ENCODE measurements at regions of chr19 and their contacts with region 1.

Region 1: DNA sequence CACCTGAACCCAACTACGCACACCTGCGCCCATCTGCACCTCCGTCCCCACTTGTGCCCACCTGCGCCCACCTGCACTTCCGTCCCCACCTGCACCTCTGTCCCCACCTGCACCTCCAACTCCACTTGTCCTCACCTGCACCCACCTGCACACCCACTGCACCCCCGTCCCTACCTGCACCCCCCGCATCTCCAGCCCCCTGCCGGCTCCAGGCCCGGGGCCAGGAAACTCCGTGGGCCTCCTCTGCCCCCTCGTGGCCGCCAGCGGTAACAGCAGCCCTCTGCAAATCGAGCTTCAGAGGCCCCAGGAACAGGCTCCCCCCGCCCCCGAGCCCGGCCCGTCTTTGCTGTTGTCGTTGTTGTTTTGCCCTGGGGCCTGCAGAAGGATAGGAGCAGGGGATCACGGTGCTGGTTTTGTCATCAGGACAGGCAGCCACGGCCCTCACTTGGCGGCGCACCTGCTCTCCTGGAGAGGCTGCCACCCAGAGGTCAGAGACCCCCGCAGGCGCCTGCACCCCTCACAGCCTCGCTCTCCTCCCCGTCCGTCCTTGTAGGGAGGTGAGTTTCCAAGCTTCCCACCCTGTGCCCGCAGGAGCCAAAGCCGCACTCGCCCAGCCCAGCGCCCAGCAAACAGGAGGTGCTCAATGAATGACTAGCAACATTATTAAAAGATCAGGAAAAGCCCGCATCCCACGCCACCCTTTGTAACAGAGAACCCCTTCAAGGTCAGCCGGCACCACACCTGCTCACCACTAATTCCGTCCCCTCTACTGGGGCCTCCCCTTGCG is 65.4 kb downstream of the GNG7 start:
- DNase-seq: peak; percentile 85
- H3K4me3 Mint-ChIP-seq: no peak overlapping the region
- H3K27ac Mint-ChIP-seq: no peak overlapping the region
- H3K4me1 Mint-ChIP-seq: peaks cover 15% of the 10 kb centered on the region
- H3K27me3 Mint-ChIP-seq: peaks cover 66% of the 10 kb centered on the region

Region 2: GRCh38 chr19:2475702-2476450 is 161.2 kb before region 1 on chr19 and contains the start of gene GADD45B:
- CTCF ChIA-PET with region 1: interaction called, 12 read pairs
- DNase-seq: peak; percentile 98
- H3K4me3 Mint-ChIP-seq: peak within 1 kb of the TSS; percentile 89
- H3K27ac Mint-ChIP-seq: peak within 1 kb of the TSS; percentile 92
- H3K4me1 Mint-ChIP-seq: peaks cover 35% of the 10 kb centered on the region
- H3K27me3 Mint-ChIP-seq: peaks cover 11% of the 10 kb centered on the region

Region 3: DNA sequence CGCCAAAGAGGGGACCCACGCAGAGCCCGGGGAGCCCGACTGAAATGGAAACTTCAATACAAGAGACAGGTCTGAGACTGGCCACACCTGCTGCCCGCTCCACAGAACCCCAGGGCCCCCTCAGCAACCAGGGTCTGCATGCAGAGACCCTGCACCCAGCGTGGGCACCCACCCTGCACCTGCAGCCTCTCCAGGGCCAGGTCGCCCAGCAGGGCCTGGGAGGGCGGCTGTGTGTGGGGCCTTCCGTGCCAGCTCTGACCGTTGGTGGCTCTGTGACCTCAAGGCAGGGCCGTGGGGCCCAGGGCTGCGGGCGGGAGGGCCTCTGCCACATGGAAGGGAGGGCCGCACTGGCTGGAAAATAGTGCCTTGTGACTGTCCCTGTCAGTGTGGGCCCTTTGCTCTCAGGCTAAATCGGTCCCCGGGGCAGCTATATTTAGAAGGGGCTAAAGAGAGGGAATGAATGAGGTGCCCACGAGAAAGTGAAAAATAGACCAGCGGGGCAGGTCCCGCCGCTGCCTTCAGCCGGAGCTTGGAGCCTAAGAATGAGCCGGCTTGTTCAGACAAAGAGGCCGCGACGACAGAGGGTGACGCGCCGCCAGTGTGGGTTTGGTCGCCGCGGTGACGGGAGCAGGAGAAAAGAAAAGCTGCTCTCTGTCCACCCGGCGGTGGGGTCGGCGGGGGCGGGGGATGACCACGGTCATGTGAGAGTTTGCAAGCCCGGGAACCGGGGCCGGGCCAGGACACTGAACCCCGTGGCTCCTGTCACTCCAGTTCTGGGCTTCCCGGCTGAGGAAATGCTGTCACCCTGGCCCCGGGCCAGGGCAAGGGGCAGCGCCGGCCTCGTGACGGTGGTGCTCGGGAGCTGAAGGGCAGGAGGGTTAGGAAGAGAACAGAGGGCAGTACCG is 90.7 kb before region 1 on chr19:
- CTCF ChIA-PET with region 1: no interaction called
- DNase-seq: no peak
- H3K4me3 Mint-ChIP-seq: no peak overlapping the region
- H3K27ac Mint-ChIP-seq: no peak overlapping the region
- H3K4me1 Mint-ChIP-seq: peaks cover 63% of the 10 kb centered on the region
- H3K27me3 Mint-ChIP-seq: no peaks in the 10 kb centered on the region

Region 4: DNA sequence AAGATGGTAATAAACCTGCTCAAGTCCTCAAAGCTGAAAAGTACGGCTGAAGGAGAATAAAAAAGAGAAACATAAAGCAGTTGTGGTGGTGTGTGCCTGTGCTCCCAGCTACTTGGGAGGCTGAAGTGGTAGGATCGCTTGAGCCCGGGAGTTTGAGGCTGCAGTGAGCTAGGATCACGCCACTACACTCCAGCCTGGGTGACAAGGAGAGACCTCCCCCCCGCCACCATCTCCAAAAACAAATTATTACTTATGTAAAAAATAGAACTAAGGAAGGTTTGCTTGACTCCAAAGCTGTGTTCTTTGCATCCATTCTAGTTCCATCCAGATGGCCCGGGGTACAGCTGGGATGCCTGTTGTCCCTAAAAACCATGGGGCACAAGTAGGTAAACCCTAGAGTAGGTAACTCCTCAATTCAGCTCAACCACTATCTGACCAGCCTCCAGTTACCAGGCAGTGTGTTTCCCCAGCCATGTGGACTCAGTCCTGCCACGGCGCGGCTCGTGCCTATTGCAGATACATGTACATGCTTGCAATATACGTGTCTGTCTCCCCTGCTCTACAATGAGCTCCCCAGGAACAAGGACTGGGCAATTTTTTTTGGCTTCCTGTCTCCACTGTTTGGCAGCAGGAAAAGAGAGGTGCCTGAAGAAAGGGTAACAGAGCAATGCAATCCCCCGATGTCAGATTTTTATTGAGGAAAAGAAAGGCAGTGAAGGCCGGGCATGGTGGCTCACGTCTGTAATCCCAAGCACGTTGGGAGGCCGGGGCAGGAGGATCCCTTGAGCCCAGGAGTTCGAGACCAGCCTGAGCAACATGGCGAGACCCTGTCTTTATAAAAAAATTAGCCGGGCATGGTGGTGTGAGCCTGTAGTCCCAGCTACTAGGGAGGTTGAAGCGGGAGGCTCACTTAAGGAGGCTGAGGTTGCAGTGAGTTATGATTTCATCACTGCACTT is 35.9 kb before region 1 on chr19:
- CTCF ChIA-PET with region 1: interaction called, 10 read pairs
- DNase-seq: no peak
- H3K4me3 Mint-ChIP-seq: no peak overlapping the region
- H3K27ac Mint-ChIP-seq: no peak overlapping the region
- H3K4me1 Mint-ChIP-seq: peaks cover 15% of the 10 kb centered on the region
- H3K27me3 Mint-ChIP-seq: peaks cover 45% of the 10 kb centered on the region

Region 5: DNA sequence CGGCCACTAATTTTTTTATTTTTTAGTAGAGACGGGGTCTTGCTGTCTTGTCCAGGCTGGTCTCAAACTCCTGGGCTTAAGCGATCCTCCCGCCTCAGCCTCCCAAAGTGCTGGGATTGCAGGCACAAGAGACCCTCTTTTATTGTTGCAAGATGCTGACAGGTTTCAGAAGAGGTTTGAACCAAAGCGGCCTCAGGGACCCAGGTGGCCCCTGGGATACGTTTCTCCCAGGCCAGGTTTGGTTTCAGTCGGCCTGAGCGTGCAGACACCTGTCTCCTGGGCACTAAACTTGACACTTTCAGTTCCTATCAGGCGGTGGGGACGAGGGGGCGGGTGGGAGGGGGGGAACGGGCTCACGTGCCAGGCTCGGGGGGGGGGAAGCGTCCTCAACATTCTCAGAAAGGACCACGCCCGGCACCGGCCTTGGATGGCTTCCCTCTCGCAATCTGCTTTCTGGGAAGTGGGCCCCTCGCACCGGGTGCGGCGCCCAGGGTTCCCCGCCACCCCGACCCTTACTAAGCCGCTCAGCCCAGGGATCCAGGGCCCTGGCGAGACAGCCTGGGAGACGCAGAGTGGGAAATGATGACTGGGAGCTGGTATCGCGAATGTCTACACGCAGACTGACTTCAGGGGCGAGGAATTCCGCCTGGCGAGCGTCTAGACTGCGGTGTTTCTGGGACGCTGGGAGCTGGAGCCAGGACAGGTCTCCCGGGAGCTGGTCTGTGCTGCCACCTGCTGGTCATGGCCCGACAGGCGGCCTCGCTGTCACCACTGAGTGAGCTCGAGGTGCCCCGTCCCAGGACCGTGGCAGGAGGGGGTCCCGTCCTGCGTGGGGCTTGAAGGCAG is 26.2 kb before region 1 on chr19:
- CTCF ChIA-PET with region 1: interaction called, 25 read pairs
- DNase-seq: peak; percentile 93
- H3K4me3 Mint-ChIP-seq: peak overlapping the region; percentile 79
- H3K27ac Mint-ChIP-seq: no peak overlapping the region
- H3K4me1 Mint-ChIP-seq: peaks cover 55% of the 10 kb centered on the region
- H3K27me3 Mint-ChIP-seq: peaks cover 61% of the 10 kb centered on the region

Region 6: DNA sequence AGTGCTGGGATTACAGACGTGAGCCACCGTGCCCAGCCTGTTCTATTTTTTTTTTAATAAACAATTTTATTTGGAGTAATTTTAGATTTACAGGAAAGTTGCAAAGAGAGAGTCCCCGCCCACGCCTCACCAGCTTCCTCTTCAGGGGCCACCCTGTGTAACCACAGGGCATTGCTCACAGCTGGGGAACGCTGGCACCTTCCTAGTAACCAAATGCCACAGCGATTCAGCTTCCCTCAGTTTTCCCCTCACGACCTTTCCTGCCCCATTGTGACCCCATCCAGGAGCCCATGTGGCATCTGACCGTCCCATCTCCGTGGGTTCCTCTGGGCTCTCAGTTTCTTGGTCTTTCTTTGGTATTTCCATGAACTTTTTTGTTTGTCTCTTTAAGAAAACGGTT is 18.5 kb before region 1 on chr19:
- CTCF ChIA-PET with region 1: interaction called, 48 read pairs
- DNase-seq: peak; percentile 72
- H3K4me3 Mint-ChIP-seq: peak overlapping the region; percentile 60
- H3K27ac Mint-ChIP-seq: peak overlapping the region; percentile 99
- H3K4me1 Mint-ChIP-seq: peaks cover 68% of the 10 kb centered on the region
- H3K27me3 Mint-ChIP-seq: peaks cover 13% of the 10 kb centered on the region

Region 7: GRCh38 chr19:2656533-2656932 is 19.4 kb after region 1 on chr19:
- CTCF ChIA-PET with region 1: no interaction called
- DNase-seq: no peak
- H3K4me3 Mint-ChIP-seq: no peak overlapping the region
- H3K27ac Mint-ChIP-seq: no peak overlapping the region
- H3K4me1 Mint-ChIP-seq: no peaks in the 10 kb centered on the region
- H3K27me3 Mint-ChIP-seq: peaks cover 8% of the 10 kb centered on the region

Region 8: GRCh38 chr19:2770055-2771013 is 133.2 kb after region 1 on chr19:
- CTCF ChIA-PET with region 1: no interaction called
- DNase-seq: no peak
- H3K4me3 Mint-ChIP-seq: no peak overlapping the region
- H3K27ac Mint-ChIP-seq: no peak overlapping the region
- H3K4me1 Mint-ChIP-seq: peaks cover 13% of the 10 kb centered on the region
- H3K27me3 Mint-ChIP-seq: no peaks in the 10 kb centered on the region